ENCODE measurements at regions of chr9 and their contacts with region 1.

Region 1: DNA sequence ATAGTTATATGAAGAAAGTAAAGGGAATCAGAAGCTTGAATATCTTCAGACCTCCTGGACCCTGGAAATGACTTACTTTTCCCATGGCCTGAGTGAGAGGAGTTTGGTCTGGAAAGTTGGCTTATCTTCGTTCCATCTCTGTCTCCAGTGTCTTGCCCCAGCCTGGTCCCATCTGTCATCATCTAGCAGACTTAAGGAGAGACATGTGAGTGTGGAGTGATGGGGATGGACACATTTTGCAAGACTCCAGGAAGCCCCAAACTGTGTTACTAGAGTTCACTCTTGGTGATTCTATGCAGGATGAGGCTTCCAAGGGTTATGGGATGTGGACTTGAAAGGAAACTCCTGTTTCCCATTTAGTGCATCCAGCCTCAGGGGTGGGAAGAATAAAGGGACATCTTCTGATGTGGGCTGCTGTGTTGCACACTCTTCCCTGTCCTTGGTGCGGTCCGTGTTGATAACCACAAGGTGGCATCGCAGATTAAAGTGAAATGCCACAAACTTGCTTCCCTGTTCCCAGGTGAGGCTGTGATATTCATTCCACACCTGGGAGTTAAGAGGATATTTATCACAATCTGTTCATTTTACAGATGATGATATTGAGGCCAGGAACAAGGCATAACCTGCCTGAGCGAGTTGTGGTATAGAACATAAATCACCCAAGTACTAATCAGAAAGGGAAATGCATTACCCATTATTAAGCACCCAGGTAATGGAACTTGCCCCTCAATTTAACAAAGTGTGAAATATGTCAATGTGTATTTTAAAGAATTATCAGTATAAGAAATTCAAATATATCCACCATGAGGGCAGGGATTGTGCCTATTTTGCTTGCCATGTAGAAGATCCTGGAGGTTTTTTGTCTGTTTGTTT is 269.9 kb upstream of the PAPPA start:
- DNase-seq: no peak

Region 2: DNA sequence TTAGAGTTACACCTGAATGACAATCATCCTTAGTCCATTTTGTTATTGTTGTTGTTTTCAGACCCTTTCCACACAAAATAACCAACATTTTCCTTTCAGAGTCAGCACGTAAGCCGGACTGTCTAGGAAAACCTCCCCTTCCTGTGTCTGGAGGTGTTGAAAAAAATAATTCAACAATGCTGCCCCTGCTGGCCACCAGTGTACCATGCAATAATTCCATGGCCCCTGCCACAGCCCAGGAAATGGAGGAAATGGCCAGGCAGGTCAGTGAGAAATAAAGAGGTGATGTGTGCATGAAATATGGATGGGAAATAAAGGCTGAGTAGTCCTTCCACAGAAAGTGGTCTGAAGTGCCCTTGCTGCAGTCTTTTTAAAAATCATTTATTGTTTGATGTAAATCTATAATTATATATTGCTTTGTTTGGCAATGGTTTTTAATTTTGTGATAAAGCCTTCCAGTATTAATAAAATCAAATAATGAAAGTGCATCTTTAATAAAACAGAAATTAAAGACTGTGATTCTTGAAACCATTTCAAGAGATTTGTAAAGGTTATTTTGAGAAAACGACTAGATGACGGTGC is 117.1 kb after region 1 on chr9:
- intact Hi-C with region 1: loop called (anchors 10 kb)
- DNase-seq: no peak

Region 3: DNA sequence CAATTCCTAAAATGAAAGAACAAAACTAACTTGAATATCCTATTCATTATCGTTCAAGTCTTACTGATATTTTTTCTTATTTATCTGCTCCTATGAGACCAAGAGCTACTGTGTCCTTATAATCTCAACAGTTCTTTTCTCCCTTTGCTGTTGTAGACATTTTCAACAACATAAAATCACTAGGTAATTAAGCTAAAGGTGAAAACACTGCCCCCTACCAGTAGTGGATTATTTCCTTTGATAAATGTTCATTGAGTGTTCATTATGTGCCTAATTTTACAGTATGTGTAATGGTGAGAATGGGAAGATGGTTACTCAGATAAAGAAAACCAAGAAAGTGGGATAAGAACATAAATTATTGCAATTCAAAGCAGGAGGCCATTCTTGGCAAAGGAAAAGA is 228.5 kb after region 1 on chr9:
- intact Hi-C with region 1: loop called (anchors 10 kb)
- DNase-seq: no peak

Region 4: DNA sequence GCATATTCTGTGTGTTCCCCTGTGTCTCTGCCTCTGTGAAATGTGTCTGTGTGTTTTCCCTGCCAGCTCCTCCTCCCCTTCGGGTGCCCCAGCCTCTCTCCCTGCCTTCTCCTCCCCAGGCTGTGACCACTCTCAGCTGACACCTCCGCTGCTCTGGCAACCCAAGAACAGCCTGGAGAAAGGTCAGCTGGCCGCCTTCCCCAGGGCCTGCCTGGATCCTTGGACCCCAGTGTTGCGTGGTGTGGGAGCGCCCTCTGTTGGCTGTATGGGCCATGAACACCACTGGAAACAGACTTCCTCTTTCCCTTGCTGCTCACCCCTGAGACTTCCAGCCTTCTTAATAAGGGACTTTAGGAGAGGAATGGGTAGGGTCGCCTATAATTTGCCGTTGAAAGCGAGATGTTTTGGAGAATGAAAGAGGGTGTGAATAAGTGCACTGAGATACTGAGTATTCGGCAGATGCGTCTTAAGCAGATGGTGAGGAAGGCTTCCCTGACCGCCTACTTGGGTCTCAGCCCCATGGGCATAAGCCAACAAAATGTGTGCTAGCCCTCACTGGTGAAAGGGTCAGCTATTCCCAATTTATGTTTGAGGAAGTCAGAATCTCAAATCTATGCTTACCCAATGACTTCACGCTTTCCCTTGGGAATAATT is 688.5 kb after region 1 on chr9:
- intact Hi-C with region 1: loop called (anchors 10 kb)
- DNase-seq: peak; percentile 93

Region 5: DNA sequence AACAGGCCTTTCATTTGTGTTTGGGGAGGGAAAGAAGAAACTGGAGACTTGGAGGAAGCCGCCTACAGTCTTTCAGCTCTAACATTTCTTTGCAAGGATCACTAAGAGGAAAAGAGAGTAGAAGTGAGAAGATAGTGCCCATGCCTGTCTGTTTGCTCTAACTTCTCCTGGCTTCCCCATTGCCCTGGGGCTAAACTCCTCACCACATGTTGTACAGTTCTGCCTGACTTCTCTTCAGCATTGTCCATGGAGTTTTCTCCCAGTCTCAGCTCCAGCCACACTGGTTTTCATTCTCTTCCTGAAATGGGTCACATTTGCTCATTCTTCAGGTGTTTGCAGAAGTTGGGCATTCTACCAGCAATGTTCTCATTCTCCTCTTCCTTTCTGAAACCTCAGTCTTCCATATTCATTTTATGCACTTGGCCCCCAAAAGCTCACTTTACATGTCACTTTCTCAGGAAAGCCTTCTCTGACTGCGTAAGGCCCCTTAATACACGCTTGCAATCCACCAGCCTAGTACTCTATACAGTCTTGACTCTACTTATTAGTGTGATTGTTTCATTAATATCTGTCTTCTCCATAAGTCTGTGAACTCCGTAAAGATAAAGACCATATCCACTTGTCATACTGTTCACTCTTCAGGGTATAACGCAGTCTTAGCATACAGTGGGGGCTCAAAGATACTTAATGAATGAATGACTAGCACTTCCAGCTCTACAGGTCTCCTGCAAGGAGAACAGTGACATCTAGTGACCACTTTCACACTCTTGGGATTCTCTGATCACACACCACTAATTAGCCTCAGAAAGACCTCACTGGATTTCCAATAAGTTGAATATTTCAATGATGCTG is 763.2 kb after region 1 on chr9:
- intact Hi-C with region 1: loop called (anchors 5 kb)
- DNase-seq: no peak

Measured in cardiac septum (tissue), 1 donor.